K562 (cell line): ENCODE measurements at regions of chr4 and their contacts with region 1.

Region 1: DNA sequence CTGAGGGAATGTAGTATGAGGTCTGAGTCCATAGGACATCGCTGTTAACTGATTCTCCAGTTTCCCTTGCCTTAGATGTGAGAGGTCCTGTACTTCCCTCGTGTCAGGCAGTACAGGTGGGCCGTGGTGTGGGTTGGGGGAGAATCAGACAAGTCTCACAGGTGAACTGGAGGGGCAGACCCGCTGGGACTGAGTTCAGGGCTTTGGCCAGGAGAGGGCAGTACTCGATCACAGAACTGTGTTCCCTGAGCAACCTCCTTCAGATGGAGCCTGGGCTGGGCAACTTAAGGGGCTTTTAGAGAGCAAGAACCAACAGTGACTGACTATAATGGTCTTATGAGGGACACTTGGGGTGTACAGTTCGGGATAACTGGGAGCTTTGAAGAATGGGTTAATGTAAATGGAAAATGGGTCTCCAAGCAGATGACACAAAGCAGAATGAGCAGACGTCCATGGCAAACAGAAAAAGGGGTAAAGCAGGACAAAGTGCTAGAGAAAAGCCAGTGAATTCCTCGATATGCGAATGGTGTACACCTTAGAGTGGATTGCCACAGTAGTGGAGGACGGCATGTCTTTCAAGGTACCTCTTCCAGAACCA is 83.6 kb downstream of the CCNG2 start:
- DNase-seq: peak; percentile 72 to 80 (median 78)
- ATAC-seq: peak; percentile 99
- H3K4me3 ChIP-seq: no peak overlapping the region
- H3K27ac ChIP-seq: no peak overlapping the region
- H3K4me1 ChIP-seq: no peaks in the 10 kb centered on the region
- H3K27me3 ChIP-seq: peaks cover 0 to 3% of the 10 kb centered on the region in 2 experiments; a peak in 2 of 5 replicates
- CTCF ChIP-seq: peak; percentile 80 to 86 (median 83)
- EP300 ChIP-seq: no peak
- POLR2A ChIP-seq: no peak
- RAD21 ChIP-seq: peak; percentile 73 to 77

Region 2: GRCh38 chr4:77169481-77169880 is 71.1 kb before region 1 on chr4:
- CTCF ChIA-PET with region 1: no interaction called
- POLR2A ChIA-PET with region 1: no interaction called
- in situ Hi-C with region 1: no loop called
- intact Hi-C with region 1: no loop called
- DNase-seq: no peak
- ATAC-seq: no peak
- H3K4me3 ChIP-seq: no peak overlapping the region
- H3K27ac ChIP-seq: no peak overlapping the region
- H3K4me1 ChIP-seq: no peaks in the 10 kb centered on the region; a peak in 1 of 5 replicates
- H3K27me3 ChIP-seq: peaks cover 6 to 20% of the 10 kb centered on the region in 2 experiments; a peak in 4 of 5 replicates
- CTCF ChIP-seq: no peak
- EP300 ChIP-seq: no peak
- POLR2A ChIP-seq: no peak
- RAD21 ChIP-seq: no peak

Region 3: DNA sequence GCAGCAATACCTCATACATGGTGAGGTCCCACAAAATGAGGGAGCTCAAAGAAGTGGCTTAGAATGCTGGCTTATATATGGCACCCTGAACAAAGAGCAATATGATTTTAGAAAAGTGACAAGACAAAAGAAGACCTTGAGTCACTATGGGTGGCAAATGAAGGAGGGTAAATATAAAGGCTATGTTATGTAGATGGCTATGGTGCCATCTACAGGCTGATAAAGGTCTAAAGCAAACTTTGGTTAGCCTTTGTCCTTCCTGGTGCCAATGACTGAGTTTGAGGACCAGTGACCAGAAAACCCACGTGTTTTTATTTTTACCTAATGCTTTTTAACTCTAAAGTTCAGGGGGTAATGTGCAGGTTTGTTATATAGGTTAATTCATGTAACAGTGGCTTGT is 68.3 kb after region 1 on chr4:
- CTCF ChIA-PET with region 1: no interaction called
- POLR2A ChIA-PET with region 1: no interaction called
- in situ Hi-C with region 1: no loop called
- intact Hi-C with region 1: loop called (anchors 1 kb)
- DNase-seq: peak; percentile 43 to 52 (median 46)
- ATAC-seq: peak; percentile 84
- H3K4me3 ChIP-seq: no peak overlapping the region
- H3K27ac ChIP-seq: no peak overlapping the region
- H3K4me1 ChIP-seq: no peaks in the 10 kb centered on the region
- H3K27me3 ChIP-seq: no peaks in the 10 kb centered on the region
- CTCF ChIP-seq: peak; percentile 40 to 65 (median 56); a peak in 5 of 6 replicates
- EP300 ChIP-seq: no peak
- POLR2A ChIP-seq: no peak
- RAD21 ChIP-seq: peak; percentile 20 to 48; a peak in 3 of 4 replicates

Region 4: GRCh38 chr4:77358315-77358928 is 117.9 kb after region 1 on chr4:
- CTCF ChIA-PET with region 1: interaction called, 15 read pairs
- POLR2A ChIA-PET with region 1: no interaction called
- in situ Hi-C with region 1: loop called (anchors 5 kb)
- intact Hi-C with region 1: loop called (anchors 1 kb)
- DNase-seq: peak; percentile 28 to 59 (median 52)
- ATAC-seq: peak; percentile 88
- H3K4me3 ChIP-seq: no peak overlapping the region
- H3K27ac ChIP-seq: no peak overlapping the region
- H3K4me1 ChIP-seq: no peaks in the 10 kb centered on the region
- H3K27me3 ChIP-seq: no peaks in the 10 kb centered on the region; a peak in 1 of 5 replicates
- CTCF ChIP-seq: peak; percentile 48 to 64 (median 64)
- EP300 ChIP-seq: no peak
- POLR2A ChIP-seq: no peak
- RAD21 ChIP-seq: peak; percentile 44 to 54

Region 5: DNA sequence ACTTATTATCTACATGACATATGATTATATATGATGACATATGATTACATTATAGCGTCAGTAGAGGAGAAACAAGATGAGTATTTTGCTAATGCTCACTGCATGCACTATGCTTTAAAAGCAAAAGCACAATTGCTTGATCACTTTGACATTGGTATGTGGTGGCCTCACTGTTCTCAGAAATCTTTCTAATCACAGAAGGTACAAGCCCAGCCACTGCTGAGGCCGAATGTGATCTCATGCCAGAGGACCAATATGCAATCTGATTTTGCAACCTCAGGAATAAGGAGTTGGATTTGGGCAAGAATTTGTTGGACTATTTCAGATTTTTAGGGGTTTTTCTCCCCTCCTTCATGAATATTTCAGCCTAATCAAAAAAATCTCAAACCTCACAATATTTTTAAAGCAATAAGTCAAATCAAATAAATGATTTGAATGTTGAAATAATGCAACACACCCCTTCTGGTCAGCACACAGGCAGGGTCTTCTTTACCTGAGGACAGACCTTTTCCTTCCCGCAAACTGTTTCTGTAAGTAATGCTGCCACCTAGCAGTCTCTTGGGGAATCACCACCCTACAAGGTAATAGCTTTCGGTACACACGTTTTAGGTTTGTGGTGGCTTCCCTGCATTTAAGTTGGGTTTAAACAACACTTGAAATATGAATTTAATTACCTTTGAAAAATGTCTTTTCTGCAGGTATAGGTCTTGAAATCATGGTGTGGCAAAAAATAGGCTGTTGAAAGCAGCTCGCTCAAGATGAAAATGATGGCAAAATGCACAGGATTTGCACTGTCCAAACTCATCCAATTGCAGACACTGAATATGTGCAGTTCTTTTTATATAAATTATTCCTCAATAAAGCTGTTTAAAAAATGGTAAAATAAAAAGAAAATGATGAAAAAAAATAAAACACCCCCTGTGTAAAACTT is 360.2 kb after region 1 on chr4:
- CTCF ChIA-PET with region 1: no interaction called
- POLR2A ChIA-PET with region 1: no interaction called
- in situ Hi-C with region 1: no loop called
- intact Hi-C with region 1: loop called (anchors 10 kb)
- DNase-seq: peak; percentile 42 to 58 (median 53)
- ATAC-seq: peak; percentile 81
- H3K4me3 ChIP-seq: no peak overlapping the region
- H3K27ac ChIP-seq: no peak overlapping the region
- H3K4me1 ChIP-seq: no peaks in the 10 kb centered on the region
- H3K27me3 ChIP-seq: peaks cover 7 to 8% of the 10 kb centered on the region in 2 experiments; a peak in 3 of 5 replicates
- CTCF ChIP-seq: peak; percentile 62 to 76 (median 74)
- EP300 ChIP-seq: no peak
- POLR2A ChIP-seq: no peak
- RAD21 ChIP-seq: peak in 1 of 2 experiments; percentile 43; a peak in 2 of 4 replicates